ENCODE measurements at regions of chr15 and their contacts with region 1.

Region 1: GRCh38 chr15:36883713-36884517 is 216.4 kb downstream of the MEIS2 start:
- DNase-seq: peak; percentile 23
- ATAC-seq: no peak
- H3K4me3 Mint-ChIP-seq: no peak overlapping the region
- H3K27ac Mint-ChIP-seq: no peak overlapping the region
- H3K4me1 Mint-ChIP-seq: peaks cover 4% of the 10 kb centered on the region
- H3K27me3 Mint-ChIP-seq: peaks cover 85% of the 10 kb centered on the region
- CTCF ChIP-seq: no peak

Region 2: GRCh38 chr15:36911322-36911944 is 27.5 kb after region 1 on chr15:
- CTCF ChIA-PET with region 1: no interaction called
- POLR2A ChIA-PET with region 1: no interaction called
- intact Hi-C with region 1: no loop called
- DNase-seq: no peak
- ATAC-seq: no peak
- H3K4me3 Mint-ChIP-seq: no peak overlapping the region
- H3K27ac Mint-ChIP-seq: no peak overlapping the region
- H3K4me1 Mint-ChIP-seq: no peaks in the 10 kb centered on the region
- H3K27me3 Mint-ChIP-seq: peaks cover 3% of the 10 kb centered on the region
- CTCF ChIP-seq: no peak

Region 3: DNA sequence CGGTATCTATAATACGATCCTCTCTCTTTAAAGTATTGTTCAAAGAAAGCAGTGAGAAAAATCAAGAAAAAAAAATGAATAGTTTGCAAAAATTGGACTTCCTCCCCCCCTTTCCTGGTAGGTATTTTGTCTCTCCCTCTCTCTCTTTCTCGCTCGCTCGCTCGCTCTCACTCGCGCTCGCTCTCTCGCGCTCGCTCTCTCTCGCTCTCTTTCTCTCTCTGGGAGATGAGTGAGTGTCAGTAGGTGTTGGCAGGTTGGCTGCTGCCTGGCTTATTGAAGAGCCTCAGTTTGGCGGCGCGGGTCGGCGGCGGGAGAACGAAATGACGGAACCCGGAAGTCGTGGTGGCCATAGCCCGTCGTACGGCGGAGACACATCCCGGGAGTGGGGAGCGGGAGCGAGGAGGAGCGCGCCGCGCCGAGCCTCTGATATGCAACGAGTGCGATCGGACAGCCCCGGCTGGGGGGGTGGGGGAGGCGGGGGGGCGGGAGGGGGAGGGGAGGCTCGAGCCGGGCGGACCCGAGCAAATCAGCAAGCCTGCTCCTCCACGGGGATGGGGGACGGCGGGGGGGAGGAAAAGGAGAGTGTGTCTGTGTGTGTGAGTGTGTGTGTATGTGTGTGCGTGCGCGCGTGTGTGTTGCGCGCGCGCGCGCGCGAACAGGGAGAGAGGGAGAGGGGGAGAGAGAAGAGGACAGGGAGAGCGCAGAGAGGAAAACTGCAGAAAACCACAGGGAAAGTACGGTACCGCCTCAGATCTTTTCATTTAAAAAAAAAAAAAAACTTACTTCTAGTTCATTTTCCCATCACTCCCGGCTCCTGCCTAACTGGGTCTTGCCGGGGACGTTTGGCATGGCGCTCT is 216.4 kb after region 1 on chr15 and contains the start of gene MEIS2:
- CTCF ChIA-PET with region 1: interaction called, 3 read pairs
- POLR2A ChIA-PET with region 1: no interaction called
- intact Hi-C with region 1: loop called (anchors 2 kb)
- DNase-seq: no peak
- ATAC-seq: peak; percentile 31
- H3K4me3 Mint-ChIP-seq: peak within 1 kb of the TSS; percentile 94
- H3K27ac Mint-ChIP-seq: peak within 1 kb of the TSS; percentile 39
- H3K4me1 Mint-ChIP-seq: peaks cover 43% of the 10 kb centered on the region
- H3K27me3 Mint-ChIP-seq: peaks cover 71% of the 10 kb centered on the region
- CTCF ChIP-seq: no peak
- total RNA-seq, gene MEIS2: 0.24 TPM in 1 of 2 replicates, not detected in the other

Region 4: DNA sequence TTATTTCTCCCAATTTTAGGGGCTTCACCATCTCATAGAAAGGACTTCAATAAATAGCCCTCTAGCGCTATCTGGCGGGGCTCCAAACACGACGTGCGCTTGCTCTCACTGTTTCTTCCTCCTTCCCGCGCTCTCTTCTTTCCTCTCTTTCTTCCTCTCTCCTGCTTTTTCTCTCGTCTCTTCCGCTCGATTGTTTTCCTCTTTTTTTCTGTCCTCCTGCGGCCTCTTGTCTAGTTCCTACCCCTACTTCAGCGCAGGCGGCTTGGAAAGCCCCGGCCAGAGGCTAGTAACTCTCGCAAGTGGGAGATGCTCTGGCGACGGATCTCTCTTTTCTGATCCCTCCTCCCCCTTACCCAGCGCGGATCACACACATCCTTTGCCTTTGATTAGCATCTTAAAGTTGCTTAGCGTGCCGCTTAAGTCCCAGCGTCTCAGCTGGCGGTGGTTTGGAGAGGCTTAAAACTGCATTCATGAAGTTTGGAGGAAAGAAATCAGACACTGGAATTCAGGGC is 222.6 kb after region 1 on chr15:
- CTCF ChIA-PET with region 1: interaction called, 3 read pairs
- POLR2A ChIA-PET with region 1: no interaction called
- intact Hi-C with region 1: loop called (anchors 1 kb)
- DNase-seq: no peak
- ATAC-seq: no peak
- H3K4me3 Mint-ChIP-seq: no peak overlapping the region
- H3K27ac Mint-ChIP-seq: no peak overlapping the region
- H3K4me1 Mint-ChIP-seq: peaks cover 26% of the 10 kb centered on the region
- H3K27me3 Mint-ChIP-seq: peaks cover 83% of the 10 kb centered on the region
- CTCF ChIP-seq: no peak

Region 5: GRCh38 chr15:37880009-37880834 is 996.3 kb after region 1 on chr15:
- CTCF ChIA-PET with region 1: no interaction called
- POLR2A ChIA-PET with region 1: no interaction called
- intact Hi-C with region 1: loop called (anchors 5 kb)
- DNase-seq: no peak
- ATAC-seq: no peak
- H3K4me3 Mint-ChIP-seq: no peak overlapping the region
- H3K27ac Mint-ChIP-seq: no peak overlapping the region
- H3K4me1 Mint-ChIP-seq: no peaks in the 10 kb centered on the region
- H3K27me3 Mint-ChIP-seq: peaks cover 6% of the 10 kb centered on the region
- CTCF ChIP-seq: no peak

Measured in activated B cell treated with CpG ODN at 0.5 μM for 24 hours (primary cell).